Kidney (tissue), 22 donors: ENCODE measurements at regions of chr6 and their contacts with region 1.

Region 1: GRCh38 chr6:85354761-85355618 is 94.9 kb upstream of the NT5E start:
- DNase-seq: peak; percentile 55 to 76 (median 62)
- H3K4me3 ChIP-seq: no peak overlapping the region
- H3K27ac ChIP-seq: no peak overlapping the region
- H3K4me1 ChIP-seq: no peaks in the 10 kb centered on the region
- H3K27me3 ChIP-seq: no peaks in the 10 kb centered on the region
- CTCF ChIP-seq: peak; percentile 96

Region 2: GRCh38 chr6:85278466-85279035 is 76.4 kb before region 1 on chr6:
- intact Hi-C with region 1: no loop called
- DNase-seq: no peak
- H3K4me3 ChIP-seq: no peak overlapping the region
- H3K27ac ChIP-seq: no peak overlapping the region
- H3K4me1 ChIP-seq: no peaks in the 10 kb centered on the region
- H3K27me3 ChIP-seq: no peaks in the 10 kb centered on the region
- CTCF ChIP-seq: no peak

Region 3: GRCh38 chr6:85482905-85483700 is 128.1 kb after region 1 on chr6:
- intact Hi-C with region 1: loop called (anchors 5 kb)
- DNase-seq: peak; percentile 70 to 89 (median 74)
- H3K4me3 ChIP-seq: no peak overlapping the region
- H3K27ac ChIP-seq: no peak overlapping the region
- H3K4me1 ChIP-seq: no peaks in the 10 kb centered on the region
- H3K27me3 ChIP-seq: no peaks in the 10 kb centered on the region
- CTCF ChIP-seq: peak; percentile 98